ENCODE measurements at regions of chr1 and their contacts with region 1.

Region 1: GRCh38 chr1:193156826-193157142 is 29.6 kb downstream of the B3GALT2 start:
- DNase-seq: no peak
- ATAC-seq: no peak
- H3K4me3 ChIP-seq: no peak overlapping the region
- H3K4me3 Mint-ChIP-seq: no peak overlapping the region
- H3K27ac ChIP-seq: no peak overlapping the region
- H3K27ac Mint-ChIP-seq: peak overlapping the region; percentile 35 to 53
- H3K4me1 ChIP-seq: peaks cover 0 to 2% of the 10 kb centered on the region in 2 experiments
- H3K4me1 Mint-ChIP-seq: peaks cover 40 to 41% (median 40%) of the 10 kb centered on the region in 3 donors
- H3K27me3 ChIP-seq: no peaks in the 10 kb centered on the region
- H3K27me3 Mint-ChIP-seq: no peaks in the 10 kb centered on the region

Region 2: GRCh38 chr1:193176113-193176512 is 19.3 kb after region 1 on chr1:
- CTCF ChIA-PET with region 1: no interaction called
- POLR2A ChIA-PET with region 1: no interaction called
- DNase-seq: no peak
- ATAC-seq: no peak
- H3K4me3 ChIP-seq: no peak overlapping the region
- H3K4me3 Mint-ChIP-seq: no peak overlapping the region
- H3K27ac ChIP-seq: no peak overlapping the region
- H3K27ac Mint-ChIP-seq: peak overlapping the region; percentile 39 to 44
- H3K4me1 ChIP-seq: peaks cover 0 to 2% of the 10 kb centered on the region in 2 experiments
- H3K4me1 Mint-ChIP-seq: peaks cover 39 to 54% (median 52%) of the 10 kb centered on the region in 3 donors
- H3K27me3 ChIP-seq: no peaks in the 10 kb centered on the region
- H3K27me3 Mint-ChIP-seq: no peaks in the 10 kb centered on the region

Region 3: DNA sequence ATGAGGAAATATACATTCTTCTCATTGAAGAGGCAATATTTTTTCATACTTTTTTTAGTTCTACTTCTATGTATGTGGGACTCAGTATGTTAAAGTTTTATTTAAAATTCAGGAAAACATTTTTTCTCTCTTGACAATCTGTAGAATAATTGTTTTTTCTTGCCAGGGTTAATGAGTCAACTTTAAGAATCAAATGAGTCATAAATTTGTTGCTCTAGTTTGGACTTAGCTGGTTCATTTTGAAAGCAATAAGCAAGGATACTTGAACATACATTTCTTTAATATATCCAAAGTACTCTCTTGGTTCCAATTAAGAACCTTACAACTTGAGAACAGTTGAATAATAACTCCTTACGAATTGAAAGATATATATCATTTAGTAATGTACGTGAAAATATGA is 1175.0 kb after region 1 on chr1:
- CTCF ChIA-PET with region 1: interaction called in 1 of 2 experiments, 10 read pairs
- POLR2A ChIA-PET with region 1: no interaction called
- DNase-seq: no peak
- ATAC-seq: no peak
- H3K4me3 ChIP-seq: no peak overlapping the region
- H3K4me3 Mint-ChIP-seq: no peak overlapping the region
- H3K27ac ChIP-seq: no peak overlapping the region
- H3K27ac Mint-ChIP-seq: no peak overlapping the region
- H3K4me1 ChIP-seq: no peaks in the 10 kb centered on the region
- H3K4me1 Mint-ChIP-seq: no peaks in the 10 kb centered on the region
- H3K27me3 ChIP-seq: no peaks in the 10 kb centered on the region
- H3K27me3 Mint-ChIP-seq: no peaks in the 10 kb centered on the region